PC-3 (cell line): ENCODE measurements at regions of chr5 and their contacts with region 1.

Region 1: DNA sequence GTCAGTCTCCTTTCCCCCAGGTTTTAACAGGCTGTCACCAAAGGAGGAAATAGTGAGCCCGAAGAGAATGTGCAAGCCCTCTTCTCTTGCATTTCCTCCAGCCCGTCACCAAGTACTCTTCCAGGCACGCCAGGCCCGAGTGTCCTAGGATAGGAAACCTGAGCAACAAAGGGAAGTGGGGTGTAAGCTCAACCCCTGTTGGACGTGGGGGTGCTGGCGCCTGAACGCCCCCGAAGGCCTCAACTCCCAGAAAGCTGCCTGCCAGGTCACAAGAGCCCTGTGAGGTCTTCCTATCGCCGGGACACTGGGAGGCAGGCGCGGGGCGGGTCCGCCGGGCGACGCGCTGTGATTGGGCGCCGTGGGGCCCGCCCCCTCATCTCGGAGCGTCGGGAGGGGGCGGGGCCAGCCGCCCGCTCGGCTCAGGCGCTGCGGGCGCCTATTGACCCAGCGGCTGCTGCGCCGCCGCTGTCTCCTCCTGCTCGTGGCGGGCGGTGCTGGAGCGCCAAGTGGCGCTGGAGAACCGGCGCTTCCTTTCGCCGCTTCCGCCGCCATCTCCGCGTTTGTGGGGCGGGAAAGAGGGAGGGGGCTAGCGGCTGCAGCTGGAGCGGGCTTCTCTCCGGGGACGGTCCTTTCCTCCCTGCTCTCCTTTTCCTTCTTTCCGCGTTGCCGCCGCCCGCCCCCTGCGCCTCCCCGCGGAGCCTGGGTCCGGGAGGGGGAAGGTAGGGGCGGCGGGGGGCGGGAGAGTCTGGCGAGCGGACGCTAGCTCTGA is 572 bp upstream of the MAN2A1 start:
- DNase-seq: peak; percentile 89
- ATAC-seq: peak; percentile 78
- H3K4me3 ChIP-seq: peak overlapping the region; percentile 98
- H3K27ac ChIP-seq: peak overlapping the region; percentile 43
- H3K4me1 ChIP-seq: peaks cover 23% of the 10 kb centered on the region
- H3K27me3 ChIP-seq: no peaks in the 10 kb centered on the region
- CTCF ChIP-seq: no peak

Region 2: DNA sequence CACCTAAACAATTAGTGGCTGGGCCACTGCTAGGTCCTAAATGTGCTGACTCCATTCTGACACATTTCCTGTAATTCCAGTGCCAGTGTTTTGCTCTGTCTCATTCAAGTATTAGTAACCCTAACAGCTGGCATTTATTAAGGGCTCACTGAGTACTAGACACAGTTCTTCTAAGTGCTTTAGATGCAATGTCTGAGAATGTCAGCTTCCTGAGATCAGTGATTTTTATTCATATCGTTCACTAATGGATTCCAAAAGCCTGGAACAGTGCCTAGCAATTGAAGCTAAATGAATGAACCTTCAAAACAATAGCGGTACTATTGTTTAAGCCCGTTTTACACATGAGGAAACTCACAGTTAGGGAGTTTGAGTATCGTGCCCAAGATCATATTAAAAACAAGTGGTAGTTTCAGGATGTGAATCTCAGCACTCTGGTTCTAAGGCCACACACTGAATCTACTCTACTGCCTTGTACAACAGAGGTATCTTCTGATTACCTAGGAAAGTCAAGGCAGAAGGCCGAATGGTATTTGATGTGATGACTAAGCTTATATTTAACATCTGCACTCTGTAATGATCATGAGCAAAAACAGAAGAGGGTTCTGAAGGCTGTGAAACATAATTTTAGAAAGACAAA is 583.4 kb before region 1 on chr5:
- CTCF ChIA-PET with region 1: no interaction called
- POLR2A ChIA-PET with region 1: interaction called, 13 read pairs
- intact Hi-C with region 1: no loop called
- DNase-seq: peak; percentile 60
- ATAC-seq: peak; percentile 70
- H3K4me3 ChIP-seq: no peak overlapping the region
- H3K27ac ChIP-seq: no peak overlapping the region
- H3K4me1 ChIP-seq: peaks cover 7% of the 10 kb centered on the region
- H3K27me3 ChIP-seq: no peaks in the 10 kb centered on the region
- CTCF ChIP-seq: no peak

Region 3: DNA sequence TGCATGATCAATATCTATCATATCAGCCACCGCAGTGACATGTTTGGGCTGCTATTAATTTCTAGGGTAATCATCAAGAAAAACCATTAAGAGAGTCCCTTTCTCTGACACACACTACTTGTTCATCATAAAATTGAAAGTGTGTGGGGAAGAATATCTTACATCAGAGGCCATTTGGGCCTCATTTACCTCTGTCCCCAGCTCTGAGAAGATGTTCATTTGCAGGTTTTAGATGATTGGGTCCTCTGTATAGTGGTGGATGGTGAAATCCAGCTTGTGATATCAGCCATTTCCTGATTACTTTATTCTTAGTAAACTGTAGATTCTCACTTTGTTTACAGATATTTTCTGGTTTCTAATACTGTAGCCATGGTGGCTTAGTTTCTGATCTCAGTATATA is 249.6 kb before region 1 on chr5:
- CTCF ChIA-PET with region 1: no interaction called
- POLR2A ChIA-PET with region 1: no interaction called
- intact Hi-C with region 1: no loop called
- DNase-seq: no peak
- ATAC-seq: no peak
- H3K4me3 ChIP-seq: no peak overlapping the region
- H3K27ac ChIP-seq: no peak overlapping the region
- H3K4me1 ChIP-seq: no peaks in the 10 kb centered on the region
- H3K27me3 ChIP-seq: no peaks in the 10 kb centered on the region
- CTCF ChIP-seq: no peak

Region 4: GRCh38 chr5:109589986-109590385 is 99.2 kb before region 1 on chr5:
- CTCF ChIA-PET with region 1: no interaction called
- POLR2A ChIA-PET with region 1: no interaction called
- intact Hi-C with region 1: loop called (anchors 10 kb)
- DNase-seq: peak; percentile 1
- ATAC-seq: no peak
- H3K4me3 ChIP-seq: no peak overlapping the region
- H3K27ac ChIP-seq: no peak overlapping the region
- H3K4me1 ChIP-seq: no peaks in the 10 kb centered on the region
- H3K27me3 ChIP-seq: no peaks in the 10 kb centered on the region
- CTCF ChIP-seq: no peak

Region 5: GRCh38 chr5:109668668-109669422 is 20.3 kb before region 1 on chr5:
- CTCF ChIA-PET with region 1: no interaction called
- POLR2A ChIA-PET with region 1: no interaction called
- intact Hi-C with region 1: no loop called
- DNase-seq: no peak
- ATAC-seq: no peak
- H3K4me3 ChIP-seq: no peak overlapping the region
- H3K27ac ChIP-seq: no peak overlapping the region
- H3K4me1 ChIP-seq: no peaks in the 10 kb centered on the region
- H3K27me3 ChIP-seq: no peaks in the 10 kb centered on the region
- CTCF ChIP-seq: no peak

Region 6: GRCh38 chr5:109823597-109823996 is 134.4 kb after region 1 on chr5:
- CTCF ChIA-PET with region 1: interaction called, 4 read pairs
- POLR2A ChIA-PET with region 1: no interaction called
- intact Hi-C with region 1: loop called (anchors 1 kb)
- DNase-seq: peak; percentile 92
- ATAC-seq: peak; percentile 71
- H3K4me3 ChIP-seq: peak overlapping the region; percentile 39
- H3K27ac ChIP-seq: peak overlapping the region; percentile 89
- H3K4me1 ChIP-seq: peaks cover 50% of the 10 kb centered on the region
- H3K27me3 ChIP-seq: no peaks in the 10 kb centered on the region
- CTCF ChIP-seq: no peak

Region 7: GRCh38 chr5:109865637-109866036 is 176.5 kb after region 1 on chr5:
- CTCF ChIA-PET with region 1: no interaction called
- POLR2A ChIA-PET with region 1: no interaction called
- intact Hi-C with region 1: loop called (anchors 5 kb)
- DNase-seq: peak; percentile 96
- ATAC-seq: peak; percentile 80
- H3K4me3 ChIP-seq: peak overlapping the region; percentile 14; the same call in 1 of the 2 replicates
- H3K27ac ChIP-seq: peak overlapping the region; percentile 96
- H3K4me1 ChIP-seq: peaks cover 75% of the 10 kb centered on the region
- H3K27me3 ChIP-seq: no peaks in the 10 kb centered on the region
- CTCF ChIP-seq: no peak

Region 8: GRCh38 chr5:110414360-110414759 is 725.2 kb after region 1 on chr5:
- CTCF ChIA-PET with region 1: no interaction called
- POLR2A ChIA-PET with region 1: no interaction called
- intact Hi-C with region 1: loop called (anchors 10 kb)
- DNase-seq: peak; percentile 31
- ATAC-seq: no peak
- H3K4me3 ChIP-seq: no peak overlapping the region
- H3K27ac ChIP-seq: no peak overlapping the region
- H3K4me1 ChIP-seq: no peaks in the 10 kb centered on the region
- H3K27me3 ChIP-seq: no peaks in the 10 kb centered on the region
- CTCF ChIP-seq: peak; percentile 68